HEK293 (cell line): ENCODE measurements at regions of chr4 and their contacts with region 1.

Region 1: GRCh38 chr4:149370785-149371420 is 444.7 kb downstream of the IQCM start:
- H3K4me3 ChIP-seq: no peak overlapping the region
- H3K27ac ChIP-seq: no peak overlapping the region
- H3K4me1 ChIP-seq: no peaks in the 10 kb centered on the region
- CTCF ChIP-seq: no peak

Region 2: GRCh38 chr4:149203256-149204001 is 167.5 kb before region 1 on chr4:
- CTCF ChIA-PET with region 1: no interaction called
- POLR2A ChIA-PET with region 1: no interaction called
- H3K4me3 ChIP-seq: no peak overlapping the region
- H3K27ac ChIP-seq: no peak overlapping the region
- H3K4me1 ChIP-seq: no peaks in the 10 kb centered on the region
- CTCF ChIP-seq: no peak

Region 3: DNA sequence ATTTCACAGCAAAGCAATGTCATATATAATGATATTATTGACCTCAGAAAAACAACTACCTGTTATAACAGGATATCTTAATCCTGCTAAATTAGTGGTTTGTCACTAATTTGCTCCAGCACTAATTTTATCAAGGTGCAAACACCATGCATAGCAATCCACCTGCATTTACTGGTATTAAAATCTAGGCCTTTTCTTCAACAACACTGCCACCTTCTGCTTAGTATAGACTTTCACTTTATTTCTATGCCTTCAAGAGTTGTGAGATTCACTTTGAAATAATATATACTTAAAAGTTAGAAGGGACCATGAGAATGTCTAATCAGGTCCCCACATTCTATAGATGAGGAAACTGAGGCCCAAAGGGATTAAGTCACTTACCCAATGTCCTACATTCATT is 526.9 kb after region 1 on chr4:
- CTCF ChIA-PET with region 1: interaction called, 11 read pairs
- POLR2A ChIA-PET with region 1: no interaction called
- H3K4me3 ChIP-seq: no peak overlapping the region
- H3K27ac ChIP-seq: no peak overlapping the region
- H3K4me1 ChIP-seq: no peaks in the 10 kb centered on the region
- CTCF ChIP-seq: no peak